Posterior cingulate gyrus (tissue), 11 donors: ENCODE measurements at regions of chr19 and their contacts with region 1.

Region 1: GRCh38 chr19:50329146-50329925 is at the start of gene KCNC3:
- DNase-seq: peak; percentile 99 to 100 (median 100)

Region 2: GRCh38 chr19:49929611-49930482 is 399.5 kb before region 1 on chr19:
- intact Hi-C with region 1: loop called (anchors 5 kb)
- DNase-seq: peak; percentile 84 to 99 (median 92)

Region 3: DNA sequence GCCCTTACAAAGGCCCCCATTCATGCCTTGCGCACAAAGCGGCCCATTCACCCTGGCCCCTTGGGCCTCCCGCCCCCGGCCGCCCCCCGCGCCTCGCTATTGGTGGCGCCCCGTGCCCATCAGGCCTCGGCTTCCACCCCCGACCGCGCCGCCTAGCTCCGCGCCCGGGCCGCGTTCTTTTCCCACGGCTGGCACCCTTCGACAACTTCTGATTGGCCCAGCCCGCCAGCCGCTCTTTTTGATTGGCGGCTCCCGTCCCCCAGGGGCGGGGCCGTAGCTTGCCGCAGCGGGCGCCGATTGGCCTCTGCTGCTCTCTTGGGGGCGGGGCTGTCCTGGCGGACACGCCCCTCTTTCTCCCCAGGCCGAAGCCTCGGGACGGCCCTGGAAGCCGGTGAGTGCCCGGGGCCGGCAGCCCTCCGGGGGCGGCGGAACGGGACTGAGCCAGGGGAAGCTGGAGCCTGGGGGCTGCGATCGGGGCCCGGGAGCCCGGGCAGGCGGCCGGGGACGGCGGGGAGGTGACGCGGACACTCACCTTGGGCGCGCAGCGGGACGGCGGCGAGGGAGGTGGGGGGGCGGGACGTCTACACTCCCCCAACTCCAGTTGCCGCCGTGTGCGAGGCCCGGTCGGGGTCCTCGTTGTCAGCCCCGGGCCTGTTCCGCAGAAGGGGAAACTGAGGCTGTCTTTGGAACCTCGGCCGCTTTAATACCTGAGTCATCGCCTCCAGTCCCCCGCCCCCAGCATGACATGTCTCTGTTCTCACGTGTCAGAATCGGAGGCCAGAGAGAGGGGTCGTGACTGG is 125.9 kb before region 1 on chr19 and contains the start of gene MYH14:
- intact Hi-C with region 1: loop called (anchors 5 kb)
- DNase-seq: peak; percentile 93 to 100 (median 96)

Region 4: DNA sequence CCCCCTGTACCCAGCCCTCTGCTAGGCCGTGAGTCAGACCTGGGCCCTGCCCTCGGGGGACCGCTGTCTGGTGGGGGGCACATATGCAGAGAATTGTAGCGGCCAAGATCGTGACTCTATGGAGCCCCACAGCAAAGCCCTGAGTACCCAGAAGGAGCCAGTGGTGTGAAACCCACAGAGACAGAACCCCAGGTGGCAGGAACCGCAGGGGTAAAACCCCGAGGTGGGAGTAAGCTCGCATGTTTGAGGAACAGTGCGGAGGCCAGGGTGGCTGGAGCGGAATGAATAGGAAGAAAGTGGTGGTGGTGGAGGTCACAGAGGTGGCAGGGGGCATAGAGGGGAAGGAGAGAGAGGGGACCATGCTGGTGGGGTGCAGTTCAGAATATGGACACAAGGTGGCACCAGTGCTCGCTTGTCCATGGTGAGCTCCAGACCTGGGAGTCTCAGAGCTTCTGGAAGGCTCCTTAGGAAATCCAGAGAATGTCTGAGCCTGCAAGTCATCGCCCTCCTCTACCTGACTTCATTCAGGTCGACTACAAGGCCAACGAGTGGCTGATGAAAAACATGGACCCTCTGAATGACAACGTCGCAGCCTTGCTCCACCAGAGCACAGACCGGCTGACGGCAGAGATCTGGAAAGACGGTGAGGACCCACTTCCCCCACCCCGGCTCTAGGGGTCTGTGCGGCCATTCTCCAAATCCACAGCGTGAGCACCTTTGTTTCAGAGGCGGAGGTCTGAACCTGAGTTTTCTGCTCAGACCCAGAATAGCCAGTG is 77.0 kb before region 1 on chr19:
- intact Hi-C with region 1: loop called (anchors 5 kb)
- DNase-seq: peak in 5 of 10 donors; percentile 32 to 88 (median 51)

Region 5: GRCh38 chr19:50383852-50384684 is 54.7 kb after region 1 on chr19 and contains the start of gene POLD1:
- intact Hi-C with region 1: no loop called
- DNase-seq: peak; percentile 88 to 99 (median 94)